BJ (cell line): ENCODE measurements at regions of chr17 and their contacts with region 1.

Region 1: DNA sequence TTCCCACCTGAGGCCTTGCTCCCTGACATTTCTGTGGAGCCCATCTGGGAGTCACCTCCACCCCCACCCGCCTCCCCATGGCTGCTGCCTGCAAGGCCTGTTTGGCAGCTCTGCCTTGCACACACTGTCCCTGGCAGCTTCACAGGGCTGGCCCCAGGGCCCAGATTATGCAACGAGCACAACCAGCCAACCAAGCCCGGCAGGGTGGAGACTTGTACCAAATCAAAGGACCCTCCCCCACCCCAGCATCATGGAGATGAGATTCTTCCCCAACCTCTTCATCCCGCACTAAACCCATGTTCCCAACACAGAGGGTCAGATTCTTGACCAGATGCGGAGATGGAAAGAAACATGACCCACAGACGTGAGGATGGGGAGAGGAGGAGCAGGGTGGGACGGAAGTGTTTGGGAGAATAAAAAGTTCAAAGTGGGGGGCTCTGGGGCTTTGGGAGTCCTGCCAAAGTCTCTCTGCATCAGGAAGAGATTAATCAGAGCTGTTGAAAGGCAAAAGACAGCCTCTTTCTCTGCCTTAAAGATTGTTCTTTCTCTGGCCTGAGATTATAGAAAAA is 3.8 kb downstream of the SMARCD2 start:
- DNase-seq: peak; percentile 34
- H3K4me3 ChIP-seq: no peak overlapping the region
- H3K27me3 ChIP-seq: no peaks in the 10 kb centered on the region
- CTCF ChIP-seq: no peak

Region 2: DNA sequence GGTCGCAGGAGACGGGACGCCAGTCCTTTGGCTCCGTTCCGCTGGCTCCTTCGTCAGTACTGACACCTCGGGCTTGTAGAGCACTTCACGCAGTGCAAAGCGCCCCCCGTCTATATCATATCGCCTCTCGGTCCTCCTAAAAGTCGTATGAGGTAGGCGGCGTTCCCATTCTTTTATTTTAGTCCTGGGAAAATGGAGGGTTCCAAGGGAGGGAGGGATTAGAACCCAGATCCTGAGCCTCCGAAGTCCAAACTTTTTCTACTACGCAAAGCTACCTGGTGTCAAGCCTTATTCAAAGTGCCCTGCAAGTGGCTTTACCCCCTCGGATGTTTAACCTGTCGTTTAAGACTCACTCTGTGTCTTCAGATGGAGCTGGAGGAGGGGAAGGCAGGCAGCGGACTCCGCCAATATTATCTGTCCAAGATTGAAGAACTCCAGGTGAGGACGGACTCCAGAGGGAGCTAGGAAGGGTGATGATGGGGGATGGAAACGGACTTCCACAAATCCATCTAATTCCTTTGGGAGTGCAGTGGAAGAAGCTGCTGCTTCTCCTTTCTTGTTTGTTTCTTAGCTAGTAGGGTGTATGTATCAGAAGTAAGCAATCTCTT is 10.8 kb before region 1 on chr17:
- CTCF ChIA-PET with region 1: interaction called, 11 read pairs
- POLR2A ChIA-PET with region 1: interaction called, 6 read pairs
- DNase-seq: no peak
- H3K4me3 ChIP-seq: peak overlapping the region; percentile 59
- H3K27me3 ChIP-seq: no peaks in the 10 kb centered on the region
- CTCF ChIP-seq: no peak